Lower leg skin (tissue), 4 donors: ENCODE measurements at regions of chr3 and their contacts with region 1.

Region 1: GRCh38 chr3:12875857-12876836 is 34.8 kb upstream of the RPL32 start:
- DNase-seq: no peak
- H3K4me3 ChIP-seq: no peak overlapping the region
- CTCF ChIP-seq: no peak
- POLR2A ChIP-seq: no peak

Region 2: DNA sequence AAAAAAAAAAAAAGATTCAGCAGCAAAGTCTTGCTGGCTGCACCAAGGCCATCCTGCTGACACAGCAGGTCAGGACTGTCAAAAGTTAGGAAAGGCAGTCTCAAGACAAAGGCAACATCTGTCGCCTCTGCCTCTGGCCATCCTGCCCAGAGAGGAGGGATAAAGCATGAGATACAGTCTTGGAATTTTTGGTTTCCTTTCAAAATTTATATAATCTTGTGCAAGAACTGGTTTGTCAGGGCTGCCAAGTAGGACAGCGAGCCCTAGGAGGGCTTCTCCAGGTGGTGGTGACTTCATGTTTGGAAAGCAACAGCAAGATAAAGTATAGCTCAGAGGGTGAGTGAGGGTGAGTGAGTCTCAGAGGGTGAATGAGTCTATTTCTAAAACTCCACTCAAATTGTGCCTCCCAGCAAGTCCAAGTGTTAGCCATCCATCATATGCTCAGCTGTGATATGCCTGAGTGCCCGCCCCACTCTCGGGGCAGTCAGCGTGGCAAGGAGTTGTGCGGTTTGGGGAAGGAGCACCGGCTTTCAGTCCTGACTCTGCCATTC is 22.9 kb before region 1 on chr3:
- intact Hi-C with region 1: no loop called
- DNase-seq: no peak
- H3K4me3 ChIP-seq: no peak overlapping the region
- CTCF ChIP-seq: no peak
- POLR2A ChIP-seq: no peak

Region 3: DNA sequence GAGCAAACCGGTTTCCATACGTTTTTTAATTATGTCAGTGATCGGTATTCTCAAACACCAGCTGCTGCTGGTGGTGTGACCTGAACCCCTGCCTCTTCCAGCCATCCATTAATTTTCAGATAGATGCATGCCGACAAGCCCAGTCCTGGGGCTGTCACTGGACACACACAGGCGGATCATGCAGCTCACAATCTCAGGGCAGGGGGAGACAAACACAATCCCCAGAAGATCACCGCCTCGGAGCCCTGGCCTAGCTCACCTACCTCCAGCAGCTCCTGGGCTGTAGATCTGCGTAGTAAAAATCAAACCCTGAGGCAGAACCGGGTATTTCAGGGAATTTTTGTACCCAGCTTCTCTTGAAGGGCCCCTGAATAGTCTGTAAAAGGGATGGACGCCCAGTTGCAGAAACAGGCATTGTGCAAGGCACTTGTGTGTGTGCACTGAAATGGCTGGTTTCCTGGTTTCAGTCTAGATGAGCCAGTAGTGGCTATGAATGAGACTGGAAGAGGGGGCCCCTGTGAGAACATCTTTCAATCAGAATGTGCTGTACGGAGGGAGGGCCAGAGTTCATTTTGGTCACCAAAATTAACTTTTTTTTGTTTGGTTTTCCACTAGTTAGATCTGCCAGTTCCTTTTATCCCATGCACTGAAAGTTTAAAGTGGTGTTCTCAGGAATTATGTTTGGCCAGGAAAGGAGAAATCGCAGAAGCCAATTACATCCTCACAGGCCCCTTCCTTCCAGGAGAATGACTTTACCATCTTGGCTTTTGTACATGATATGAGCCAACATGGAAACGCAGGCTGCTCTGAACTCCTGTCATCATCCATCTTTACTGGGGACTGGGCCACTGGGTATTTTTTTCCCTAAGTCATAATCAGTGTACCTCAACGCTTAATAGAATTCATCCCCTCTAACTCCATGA is 20.2 kb after region 1 on chr3:
- intact Hi-C with region 1: no loop called
- DNase-seq: no peak
- H3K4me3 ChIP-seq: no peak overlapping the region
- CTCF ChIP-seq: no peak
- POLR2A ChIP-seq: no peak

Region 4: GRCh38 chr3:12984023-12984823 is 108.1 kb after region 1 on chr3:
- intact Hi-C with region 1: loop called (anchors 10 kb)
- DNase-seq: peak in 1 of 2 donors; percentile 53
- H3K4me3 ChIP-seq: no peak overlapping the region
- CTCF ChIP-seq: peak in 1 of 3 donors; percentile 14
- POLR2A ChIP-seq: no peak

Region 5: GRCh38 chr3:13718436-13718835 is 842.3 kb after region 1 on chr3:
- intact Hi-C with region 1: no loop called
- DNase-seq: peak in 1 of 2 donors; percentile 70
- H3K4me3 ChIP-seq: no peak overlapping the region
- CTCF ChIP-seq: no peak
- POLR2A ChIP-seq: no peak